Common myeloid progenitor, CD34-positive (primary cell): ENCODE measurements at regions of chr7 and their contacts with region 1.

Region 1: GRCh38 chr7:28926871-28927597 is 31.1 kb downstream of the TRIL start:
- DNase-seq: peak; percentile 90 to 96 (median 94)
- H3K4me3 ChIP-seq: peak overlapping the region; percentile 40 to 88 (median 71)
- H3K27ac ChIP-seq: peak overlapping the region in 1 of 2 experiments; percentile 9
- H3K4me1 ChIP-seq: peaks cover 0 to 12% (median 5%) of the 10 kb centered on the region in 4 experiments
- H3K27me3 ChIP-seq: peaks cover 0 to 2% (median 0%) of the 10 kb centered on the region in 5 experiments

Region 2: DNA sequence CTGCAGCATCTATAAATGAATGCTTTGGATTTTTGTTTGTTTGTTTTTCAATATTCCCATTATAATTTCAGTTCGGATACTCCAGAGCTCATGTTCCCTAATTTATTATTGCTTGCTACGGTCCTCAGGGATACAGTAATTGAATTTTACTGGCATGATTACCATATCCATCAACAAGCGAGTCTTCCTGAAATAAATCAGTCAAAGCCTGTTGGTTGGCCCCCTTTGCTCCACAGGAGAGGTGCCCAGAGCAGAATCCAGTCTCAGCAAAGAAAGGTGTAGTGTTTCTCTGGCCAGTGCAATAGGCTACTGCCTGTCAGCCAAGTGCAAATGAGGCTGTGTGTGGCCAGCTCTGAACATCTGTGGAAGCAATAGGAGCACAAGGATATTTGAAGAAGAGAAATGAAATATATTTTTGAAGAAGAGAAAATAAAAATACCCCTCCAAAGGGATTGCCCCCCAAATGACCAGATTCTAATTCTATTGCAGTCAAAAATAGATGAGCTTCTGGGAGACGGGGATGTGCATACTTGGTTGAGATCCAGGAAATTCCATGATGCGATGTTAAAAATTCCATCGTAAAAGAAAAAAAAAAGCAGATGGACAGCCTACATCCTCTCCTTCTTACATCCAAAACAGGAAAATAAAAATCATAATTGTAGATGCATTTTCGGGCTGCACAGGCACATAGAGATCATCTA is 13.0 kb after region 1 on chr7:
- CTCF ChIA-PET with region 1: interaction called, 45 read pairs
- POLR2A ChIA-PET with region 1: no interaction called
- DNase-seq: no peak
- H3K4me3 ChIP-seq: no peak overlapping the region
- H3K27ac ChIP-seq: no peak overlapping the region
- H3K4me1 ChIP-seq: no peaks in the 10 kb centered on the region
- H3K27me3 ChIP-seq: no peaks in the 10 kb centered on the region

Region 3: DNA sequence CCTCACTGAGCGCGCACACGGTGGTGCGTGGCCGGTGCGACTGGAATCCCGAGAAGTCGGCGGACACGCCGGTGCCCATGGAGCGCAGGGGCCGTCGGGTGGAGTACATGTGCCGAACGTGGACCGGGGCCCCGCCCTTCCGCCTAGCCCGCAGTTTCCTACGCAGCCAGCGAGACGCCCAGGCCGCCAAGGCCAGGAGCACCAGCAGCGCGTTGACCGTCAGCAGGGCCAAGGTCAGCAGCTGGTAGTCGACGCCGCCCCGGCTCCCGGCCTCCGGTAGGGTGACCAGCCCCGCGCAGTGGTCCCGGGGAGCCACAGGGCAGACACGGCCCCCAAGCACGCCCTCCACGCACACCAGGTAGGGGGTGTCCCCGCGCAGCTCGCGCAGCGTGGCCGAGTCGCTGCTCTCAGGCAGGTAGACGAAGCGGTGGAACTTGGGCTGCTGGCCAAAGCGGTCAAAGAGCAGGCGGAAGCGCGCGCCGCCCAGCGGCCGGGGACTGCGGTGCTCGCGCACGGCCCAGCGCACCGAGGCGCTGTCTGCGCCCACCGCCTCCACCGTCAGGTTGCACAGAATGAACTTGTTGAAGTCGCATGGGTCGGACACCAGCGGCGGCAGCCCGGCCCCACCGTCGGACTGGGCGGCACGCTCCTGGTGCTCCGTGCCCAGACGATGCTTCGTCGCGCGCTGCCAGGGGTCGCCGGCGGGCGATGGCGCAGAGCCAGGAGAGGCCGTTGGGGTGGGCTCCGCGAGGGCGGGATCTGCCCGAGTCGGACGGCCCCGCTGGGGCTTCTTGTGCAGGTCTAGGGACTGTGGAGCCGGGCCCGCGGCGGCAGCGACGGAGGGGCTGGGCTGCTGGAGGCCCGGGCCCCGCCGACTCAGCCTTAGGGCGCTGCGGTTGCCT is 28.9 kb after region 1 on chr7:
- CTCF ChIA-PET with region 1: interaction called, 97 read pairs
- POLR2A ChIA-PET with region 1: interaction called, 5 read pairs
- DNase-seq: peak; percentile 40 to 73 (median 68)
- H3K4me3 ChIP-seq: peak overlapping the region; percentile 6 to 74 (median 51)
- H3K27ac ChIP-seq: no peak overlapping the region
- H3K4me1 ChIP-seq: peaks cover 3 to 46% (median 43%) of the 10 kb centered on the region in 4 experiments
- H3K27me3 ChIP-seq: peaks cover 0 to 76% (median 29%) of the 10 kb centered on the region in 5 experiments

Region 4: GRCh38 chr7:29030781-29031275 is 103.8 kb after region 1 on chr7:
- CTCF ChIA-PET with region 1: no interaction called
- POLR2A ChIA-PET with region 1: no interaction called
- DNase-seq: no peak
- H3K4me3 ChIP-seq: no peak overlapping the region
- H3K27ac ChIP-seq: no peak overlapping the region
- H3K4me1 ChIP-seq: no peaks in the 10 kb centered on the region
- H3K27me3 ChIP-seq: no peaks in the 10 kb centered on the region

Region 5: GRCh38 chr7:29091715-29092114 is 164.7 kb after region 1 on chr7:
- CTCF ChIA-PET with region 1: interaction called, 343 read pairs
- POLR2A ChIA-PET with region 1: no interaction called
- DNase-seq: peak in 2 of 3 donors; percentile 73 to 76
- H3K4me3 ChIP-seq: peak overlapping the region in 5 of 7 experiments; percentile 44 to 69 (median 52)
- H3K27ac ChIP-seq: peak overlapping the region in 1 of 2 experiments; percentile 53
- H3K4me1 ChIP-seq: peaks cover 5 to 27% (median 18%) of the 10 kb centered on the region in 4 experiments
- H3K27me3 ChIP-seq: no peaks in the 10 kb centered on the region

Region 6: GRCh38 chr7:29105752-29106668 is 179.0 kb after region 1 on chr7:
- CTCF ChIA-PET with region 1: interaction called, 343 read pairs
- POLR2A ChIA-PET with region 1: no interaction called
- DNase-seq: peak; percentile 69 to 85 (median 78)
- H3K4me3 ChIP-seq: no peak overlapping the region
- H3K27ac ChIP-seq: no peak overlapping the region
- H3K4me1 ChIP-seq: peaks cover 0 to 19% (median 16%) of the 10 kb centered on the region in 4 experiments
- H3K27me3 ChIP-seq: no peaks in the 10 kb centered on the region

Region 7: GRCh38 chr7:29345600-29345999 is 418.6 kb after region 1 on chr7:
- CTCF ChIA-PET with region 1: interaction called, 23 read pairs
- POLR2A ChIA-PET with region 1: no interaction called
- DNase-seq: peak; percentile 54 to 70 (median 67)
- H3K4me3 ChIP-seq: no peak overlapping the region
- H3K27ac ChIP-seq: no peak overlapping the region
- H3K4me1 ChIP-seq: peaks cover 18 to 48% (median 38%) of the 10 kb centered on the region in 4 experiments
- H3K27me3 ChIP-seq: no peaks in the 10 kb centered on the region

Region 8: DNA sequence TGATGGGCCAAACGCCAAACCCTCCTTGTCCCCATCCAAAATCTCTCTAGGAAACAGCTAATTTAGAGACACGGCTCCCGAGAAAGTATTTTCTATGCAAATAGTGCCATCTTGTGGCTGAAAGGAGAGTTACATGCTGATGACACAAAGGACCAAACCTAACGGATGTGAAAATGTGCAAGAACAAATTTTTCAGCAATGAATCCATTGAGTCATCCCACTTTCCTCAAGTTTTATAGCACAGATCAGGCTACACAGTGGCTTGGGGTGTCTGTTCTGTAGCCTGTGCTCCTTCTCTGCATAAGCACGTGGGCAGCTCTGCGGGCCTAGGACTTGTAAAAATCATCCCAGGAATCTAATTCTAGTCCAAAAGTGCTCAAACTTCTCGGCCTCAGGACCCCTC is 481.8 kb after region 1 on chr7:
- CTCF ChIA-PET with region 1: interaction called, 168 read pairs
- POLR2A ChIA-PET with region 1: no interaction called
- DNase-seq: peak; percentile 61 to 79 (median 64)
- H3K4me3 ChIP-seq: no peak overlapping the region
- H3K27ac ChIP-seq: no peak overlapping the region
- H3K4me1 ChIP-seq: no peaks in the 10 kb centered on the region
- H3K27me3 ChIP-seq: no peaks in the 10 kb centered on the region